ENCODE measurements at regions of chr11 and their contacts with region 1.

Region 1: DNA sequence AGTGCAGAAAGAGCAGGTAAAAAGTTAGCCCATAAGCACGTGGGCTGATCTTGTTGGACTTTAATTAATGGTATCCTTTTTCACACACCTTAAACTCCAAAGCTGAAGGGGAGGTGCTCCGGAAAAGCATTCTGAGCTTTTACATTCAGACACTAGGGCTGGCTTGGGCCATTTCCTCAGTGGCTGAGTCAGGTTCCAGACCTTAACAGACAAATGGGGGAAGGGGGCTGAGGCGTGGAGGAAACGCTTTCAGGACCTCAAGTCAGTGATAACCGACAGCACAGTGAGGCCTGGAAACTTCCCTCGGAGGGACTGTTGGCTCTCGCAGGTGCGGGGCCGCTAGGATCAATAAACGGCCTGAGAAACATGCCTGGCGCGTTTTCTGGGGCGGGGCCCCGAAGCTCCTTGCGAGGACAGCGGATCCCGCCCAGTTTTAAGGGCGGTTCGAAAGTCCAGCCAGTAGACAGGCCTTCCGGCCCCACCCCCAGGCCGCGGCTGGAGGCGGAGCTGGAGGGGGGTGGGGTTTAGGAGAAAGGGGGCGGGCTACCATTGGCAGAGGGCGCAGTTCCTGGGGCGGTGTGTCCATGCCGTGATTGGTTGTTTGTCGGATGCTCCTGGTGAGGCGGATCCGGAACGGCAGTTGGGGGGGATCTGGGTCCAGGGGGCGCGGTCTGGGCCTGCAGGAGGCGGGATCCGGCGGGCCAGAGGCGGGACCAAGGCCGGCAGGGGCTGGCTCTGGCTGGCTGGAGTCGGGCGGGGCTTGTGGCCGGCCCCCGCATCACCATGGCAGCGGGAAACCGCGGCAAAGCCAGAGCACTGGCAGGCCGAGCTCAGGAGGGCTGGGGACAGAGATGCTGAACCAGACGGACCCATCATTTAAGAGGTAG is 8.0 kb downstream of the C11orf52 start:
- DNase-seq: peak; percentile 96 to 98 (median 97)
- H3K4me3 ChIP-seq: peak overlapping the region; percentile 39
- H3K27ac ChIP-seq: peak overlapping the region; percentile 19 to 79
- H3K4me1 ChIP-seq: peaks cover 10% of the 10 kb centered on the region
- H3K27me3 ChIP-seq: no peaks in the 10 kb centered on the region
- CTCF ChIP-seq: no peak
- EP300 ChIP-seq: no peak
- POLR2A ChIP-seq: peak; percentile 58

Region 2: GRCh38 chr11:111911563-111912401 is 15.0 kb before region 1 on chr11 and contains the start of gene CRYAB:
- intact Hi-C with region 1: loop called in 1 of 4 experiments (anchors 2 kb)
- DNase-seq: peak; percentile 82 to 87 (median 86)
- H3K4me3 ChIP-seq: peak within 1 kb of the TSS; percentile 58
- H3K27ac ChIP-seq: peak within 1 kb of the TSS; percentile 90 to 94
- H3K4me1 ChIP-seq: peaks cover 11% of the 10 kb centered on the region
- H3K27me3 ChIP-seq: no peaks in the 10 kb centered on the region
- CTCF ChIP-seq: no peak
- EP300 ChIP-seq: peak; percentile 26
- POLR2A ChIP-seq: peak; percentile 59
- total RNA-seq, gene CRYAB: 22.7 to 121 (median 72.5) TPM